GM13977 (cell line): ENCODE measurements at regions of chr1 and their contacts with region 1.

Region 1: DNA sequence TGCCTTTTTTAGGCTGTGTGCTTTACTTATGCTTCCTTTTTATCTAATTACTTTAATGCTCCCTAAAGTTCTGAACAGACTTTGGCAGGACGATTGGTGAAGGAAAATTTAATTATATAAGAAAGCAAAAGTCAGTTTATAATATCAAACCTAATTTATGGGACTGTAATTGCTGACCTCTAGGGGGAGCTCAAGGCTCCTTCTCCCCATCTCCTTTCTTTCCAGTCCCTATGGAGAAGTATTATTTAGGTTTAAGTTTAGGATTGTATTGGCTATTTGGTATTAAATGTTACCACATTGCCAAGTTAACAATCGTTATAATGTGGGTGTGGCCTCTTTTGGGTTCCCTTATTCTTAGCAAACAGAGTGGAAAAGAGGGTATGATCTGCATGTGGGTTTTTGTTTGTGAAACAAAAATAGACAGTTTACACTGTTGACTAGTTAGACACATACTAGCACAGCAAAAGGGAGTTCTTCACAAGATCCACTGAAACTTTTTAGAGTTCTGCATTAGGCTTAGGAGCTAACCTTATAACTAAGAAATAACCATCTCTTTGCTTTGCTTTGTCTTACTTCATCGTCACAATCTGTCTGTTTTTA is 48.2 kb upstream of the TNFSF4 start:
- DNase-seq: no peak
- CTCF ChIP-seq: peak; percentile 66

Region 2: DNA sequence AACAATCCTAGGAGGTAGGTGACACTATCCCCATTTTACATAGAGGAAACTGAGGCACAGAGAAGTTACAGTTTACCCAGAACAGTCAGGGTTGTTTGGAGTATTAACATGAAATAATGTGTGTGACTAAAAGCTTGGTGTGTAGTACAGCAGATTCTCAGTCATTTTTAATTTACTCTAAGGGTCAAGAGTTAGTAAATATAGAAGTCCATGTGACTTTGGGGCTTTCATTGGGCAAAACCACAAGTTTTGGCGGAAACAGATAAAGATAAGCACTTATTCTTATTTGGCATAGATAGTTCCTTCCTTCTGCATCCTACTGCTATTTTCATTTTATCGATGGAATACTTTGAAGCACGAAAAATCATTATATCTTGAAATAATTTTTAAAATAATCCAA is 1285.5 kb before region 1 on chr1:
- in situ Hi-C with region 1: no loop called
- DNase-seq: no peak
- CTCF ChIP-seq: no peak

Region 3: GRCh38 chr1:173420330-173420806 is 165.1 kb after region 1 on chr1:
- in situ Hi-C with region 1: loop called (anchors 25 kb)
- DNase-seq: no peak
- CTCF ChIP-seq: peak; percentile 70